Vagina (tissue), 2 donors: ENCODE measurements at regions of chr7 and their contacts with region 1.

Region 1: DNA sequence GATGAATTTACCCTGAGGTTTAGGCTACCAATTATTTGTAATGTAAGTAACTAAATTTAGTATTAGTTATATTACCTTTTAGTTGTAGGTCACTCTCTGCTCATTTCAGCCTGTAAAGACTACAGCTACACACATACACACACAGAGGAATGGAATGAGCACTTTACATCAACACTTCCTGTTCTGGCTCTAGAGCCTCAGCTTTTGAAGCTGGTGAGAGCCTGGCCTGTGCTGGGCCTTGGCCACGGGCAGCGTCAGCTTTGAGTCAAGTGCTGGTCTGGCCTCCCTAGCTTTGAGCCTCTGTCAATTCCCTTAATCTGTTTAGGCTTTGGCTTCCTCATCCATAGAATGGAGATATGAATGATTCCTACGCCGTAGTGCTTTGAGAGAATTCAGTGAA is 141.7 kb downstream of the EGFR start:
- DNase-seq: no peak
- H3K4me3 ChIP-seq: no peak overlapping the region
- H3K27ac ChIP-seq: no peak overlapping the region
- H3K4me1 ChIP-seq: no peaks in the 10 kb centered on the region
- H3K27me3 ChIP-seq: no peaks in the 10 kb centered on the region
- CTCF ChIP-seq: no peak
- POLR2A ChIP-seq: no peak

Region 2: DNA sequence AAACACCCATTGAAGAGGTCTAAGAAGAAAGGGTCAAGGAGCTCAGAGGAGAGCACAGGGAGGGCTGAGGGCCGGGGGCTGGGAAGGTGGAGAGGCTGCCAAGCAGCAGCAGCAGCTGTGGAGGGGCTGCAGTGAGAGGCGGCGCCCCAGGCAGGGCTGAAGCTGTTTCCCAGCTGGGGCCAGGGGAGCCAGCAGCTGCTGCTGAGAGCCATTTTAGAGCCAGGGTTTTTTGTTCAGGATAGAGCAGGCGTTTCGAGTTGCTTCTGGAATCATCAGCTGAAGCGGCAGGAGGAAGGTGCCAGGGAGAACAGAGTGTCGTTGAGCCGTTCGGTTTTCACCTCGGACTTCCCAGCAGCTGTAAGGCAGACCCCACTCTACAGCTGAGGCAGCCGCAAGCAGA is 267.3 kb after region 1 on chr7:
- intact Hi-C with region 1: loop called (anchors 5 kb)
- DNase-seq: peak in 1 of 2 donors; percentile 88
- H3K4me3 ChIP-seq: peak overlapping the region in 1 of 2 donors; percentile 6
- H3K27ac ChIP-seq: peak overlapping the region; percentile 62
- H3K4me1 ChIP-seq: peaks cover 13% of the 10 kb centered on the region
- H3K27me3 ChIP-seq: no peaks in the 10 kb centered on the region
- CTCF ChIP-seq: no peak
- POLR2A ChIP-seq: no peak